ENCODE measurements at regions of chr12 and their contacts with region 1.

Region 1: GRCh38 chr12:102939670-102940222 is 17.7 kb upstream of the ASCL1 start:
- DNase-seq: no peak
- ATAC-seq: no peak
- H3K4me3 Mint-ChIP-seq: no peak overlapping the region
- H3K27ac Mint-ChIP-seq: no peak overlapping the region
- H3K4me1 Mint-ChIP-seq: no peaks in the 10 kb centered on the region
- H3K27me3 Mint-ChIP-seq: peaks cover 29% of the 10 kb centered on the region
- CTCF ChIP-seq: no peak

Region 2: DNA sequence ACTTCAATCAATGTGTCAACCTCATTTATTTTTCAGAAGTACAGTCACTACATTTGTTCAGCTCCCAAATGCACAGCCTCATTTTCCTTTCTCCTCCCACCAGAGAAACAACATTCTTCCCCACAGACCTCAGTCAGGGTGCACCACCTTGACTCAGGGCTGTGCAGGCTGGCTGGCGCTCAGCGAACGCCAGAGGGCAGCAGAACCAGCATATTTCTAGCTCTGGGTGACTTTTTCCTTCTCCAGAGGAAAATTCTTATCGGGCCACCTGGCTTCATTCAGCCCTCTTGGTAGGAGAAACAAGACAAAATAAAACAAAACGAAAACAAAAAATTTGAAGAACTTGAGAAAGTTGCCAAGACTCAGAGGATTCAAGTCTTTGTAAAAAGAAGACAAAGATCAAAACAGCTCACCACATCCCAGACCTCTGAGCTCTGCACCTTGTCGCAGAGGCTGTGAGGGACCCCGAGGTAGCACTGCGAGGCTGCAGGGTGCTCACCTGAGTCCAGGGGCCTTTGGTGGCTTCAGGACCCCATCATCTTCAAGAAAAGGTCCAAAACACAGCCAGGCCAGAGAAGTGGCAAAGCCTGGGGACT is 56.4 kb before region 1 on chr12:
- CTCF ChIA-PET with region 1: interaction called, 10 read pairs
- POLR2A ChIA-PET with region 1: no interaction called
- intact Hi-C with region 1: no loop called
- DNase-seq: peak; percentile 59
- ATAC-seq: peak; percentile 49
- H3K4me3 Mint-ChIP-seq: no peak overlapping the region
- H3K27ac Mint-ChIP-seq: no peak overlapping the region
- H3K4me1 Mint-ChIP-seq: no peaks in the 10 kb centered on the region
- H3K27me3 Mint-ChIP-seq: peaks cover 8% of the 10 kb centered on the region
- CTCF ChIP-seq: peak; percentile 78

Region 3: DNA sequence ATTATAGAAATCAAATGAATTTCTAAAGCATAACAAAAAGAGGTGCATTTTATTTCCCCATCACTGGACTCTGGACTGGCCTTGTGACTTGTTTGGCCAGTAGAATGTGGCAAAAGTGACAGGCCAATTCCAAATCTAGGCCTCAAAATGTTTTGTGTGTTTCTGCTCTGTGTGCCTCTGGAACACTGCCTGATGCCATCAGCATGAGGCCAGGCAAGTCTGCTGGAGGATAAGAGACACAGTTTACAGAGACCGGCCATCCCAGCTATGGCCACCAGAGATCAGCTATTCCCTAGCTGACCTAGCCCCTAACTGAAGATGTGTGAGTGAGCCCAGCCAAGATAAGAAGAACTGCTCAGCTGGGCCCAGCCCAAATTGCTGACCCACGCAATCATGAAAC is 50.7 kb after region 1 on chr12:
- CTCF ChIA-PET with region 1: no interaction called
- POLR2A ChIA-PET with region 1: no interaction called
- intact Hi-C with region 1: no loop called
- DNase-seq: no peak
- ATAC-seq: no peak
- H3K4me3 Mint-ChIP-seq: no peak overlapping the region
- H3K27ac Mint-ChIP-seq: no peak overlapping the region
- H3K4me1 Mint-ChIP-seq: peaks cover 6% of the 10 kb centered on the region
- H3K27me3 Mint-ChIP-seq: no peaks in the 10 kb centered on the region
- CTCF ChIP-seq: no peak